AG04449 (cell line): ENCODE measurements at regions of chr6 and their contacts with region 1.

Region 1: DNA sequence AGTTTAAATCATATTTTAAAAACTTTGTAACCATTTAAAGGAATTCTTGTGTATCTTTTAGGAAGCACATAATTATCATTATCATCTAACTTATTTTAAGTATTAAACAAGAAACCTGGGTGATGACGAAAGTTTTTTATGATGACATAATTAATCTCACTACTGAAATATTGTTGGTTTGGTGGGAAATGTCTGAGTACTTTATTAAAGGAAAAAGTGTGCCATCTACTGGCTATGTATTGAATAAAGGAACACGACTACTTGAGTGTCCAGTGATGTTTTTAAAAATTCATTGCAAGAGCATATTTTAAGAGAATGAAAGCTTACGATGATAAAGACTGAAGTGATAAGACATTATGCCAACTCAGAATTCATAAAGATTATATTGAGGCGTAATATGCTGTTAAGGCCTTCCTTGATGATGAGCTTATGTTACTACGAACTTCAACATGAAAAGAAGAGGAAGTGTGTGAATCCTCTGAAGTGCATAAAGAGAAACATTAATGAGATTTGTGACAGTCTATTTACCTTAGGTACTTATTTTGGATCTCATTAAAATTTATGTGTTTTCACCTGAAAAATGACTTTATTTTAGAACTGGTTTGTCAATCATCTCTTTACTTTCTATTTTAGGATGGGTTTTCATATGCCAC is 12.0 kb upstream of the TRMT11 start:
- DNase-seq: no peak
- H3K4me3 ChIP-seq: no peak overlapping the region
- CTCF ChIP-seq: no peak

Region 2: GRCh38 chr6:125498606-125499005 is 475.7 kb before region 1 on chr6:
- CTCF ChIA-PET with region 1: no interaction called
- POLR2A ChIA-PET with region 1: no interaction called
- DNase-seq: no peak
- H3K4me3 ChIP-seq: no peak overlapping the region
- CTCF ChIP-seq: no peak

Region 3: DNA sequence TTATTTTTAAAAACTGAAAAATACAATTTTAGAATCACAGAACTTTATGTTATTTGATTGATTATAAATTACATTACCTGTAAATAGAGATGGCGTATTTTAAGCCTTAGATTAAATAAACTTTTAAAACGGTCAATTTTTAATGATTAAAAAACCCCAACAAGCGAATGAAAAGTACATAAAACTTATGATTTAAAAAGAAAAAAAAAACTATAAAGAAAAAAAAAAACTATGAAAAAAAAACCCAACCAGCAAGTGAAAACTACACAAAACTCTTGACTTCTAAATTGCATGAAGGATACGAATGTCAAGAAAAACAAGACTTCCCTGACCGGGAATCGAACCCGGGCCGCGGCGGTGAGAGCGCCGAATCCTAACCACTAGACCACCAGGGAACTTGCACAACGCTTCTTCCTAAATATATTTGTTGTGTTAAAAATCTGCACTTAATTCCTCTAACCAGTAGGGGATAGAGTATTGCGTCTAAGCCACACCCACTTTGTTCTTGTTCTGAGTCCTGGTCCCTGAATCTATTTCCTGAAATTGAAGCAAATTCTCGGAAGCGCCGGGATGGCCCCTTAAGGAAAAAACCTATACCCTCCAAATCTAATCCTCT is 194.3 kb before region 1 on chr6:
- CTCF ChIA-PET with region 1: interaction called, 46 read pairs
- POLR2A ChIA-PET with region 1: no interaction called
- DNase-seq: no peak
- H3K4me3 ChIP-seq: peak overlapping the region; percentile 73
- CTCF ChIP-seq: no peak

Region 4: GRCh38 chr6:125790358-125791150 is 183.8 kb before region 1 on chr6 and contains the start of gene NCOA7:
- CTCF ChIA-PET with region 1: interaction called, 75 read pairs
- POLR2A ChIA-PET with region 1: no interaction called
- DNase-seq: no peak
- H3K4me3 ChIP-seq: peak within 1 kb of the TSS; percentile 72
- CTCF ChIP-seq: peak; percentile 11

Region 5: GRCh38 chr6:125858427-125859320 is 115.7 kb before region 1 on chr6:
- CTCF ChIA-PET with region 1: interaction called, 65 read pairs
- POLR2A ChIA-PET with region 1: no interaction called
- DNase-seq: no peak
- H3K4me3 ChIP-seq: no peak overlapping the region
- CTCF ChIP-seq: peak; percentile 88

Region 6: GRCh38 chr6:125867483-125867935 is 106.8 kb before region 1 on chr6:
- CTCF ChIA-PET with region 1: interaction called, 10 read pairs
- POLR2A ChIA-PET with region 1: no interaction called
- DNase-seq: peak; percentile 41
- H3K4me3 ChIP-seq: no peak overlapping the region
- CTCF ChIP-seq: no peak

Region 7: DNA sequence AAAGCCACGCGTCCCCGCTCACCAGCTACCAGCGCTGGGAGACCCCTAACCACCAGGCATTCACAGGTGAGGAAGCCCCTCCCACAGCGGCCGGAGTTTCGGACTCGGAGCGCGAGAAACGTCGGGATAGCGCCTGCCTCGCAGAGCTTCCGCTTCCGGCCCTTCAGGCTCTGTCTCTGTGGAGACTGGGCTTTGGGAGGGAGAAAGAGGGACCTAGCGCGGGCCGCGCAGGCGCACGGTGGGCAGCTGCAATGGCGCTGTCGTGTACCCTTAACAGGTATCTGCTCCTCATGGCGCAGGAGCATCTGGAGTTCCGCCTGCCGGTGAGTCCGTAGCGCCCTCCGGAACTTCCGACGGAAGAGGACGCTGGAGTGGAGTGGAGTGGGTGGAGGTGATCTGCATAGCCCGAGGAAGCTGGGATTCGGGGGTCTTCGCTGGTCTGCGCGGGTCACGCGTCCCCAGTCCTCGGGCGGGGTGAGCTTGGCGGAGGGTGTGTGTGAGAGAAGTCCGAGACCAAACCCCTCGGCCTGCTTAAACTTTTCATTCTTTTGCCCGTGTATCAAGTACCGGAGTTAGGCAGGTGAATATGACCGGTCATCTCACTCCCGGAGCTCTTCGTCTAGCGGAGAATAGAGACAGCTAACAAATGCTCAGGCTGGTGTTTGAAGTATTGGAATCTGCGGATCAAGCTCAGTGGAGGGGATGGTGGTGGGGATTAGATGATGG is 12.1 kb after region 1 on chr6 and contains the start of gene TRMT11:
- CTCF ChIA-PET with region 1: interaction called, 14 read pairs
- POLR2A ChIA-PET with region 1: no interaction called
- DNase-seq: no peak
- H3K4me3 ChIP-seq: peak within 1 kb of the TSS; percentile 95
- CTCF ChIP-seq: no peak

Region 8: DNA sequence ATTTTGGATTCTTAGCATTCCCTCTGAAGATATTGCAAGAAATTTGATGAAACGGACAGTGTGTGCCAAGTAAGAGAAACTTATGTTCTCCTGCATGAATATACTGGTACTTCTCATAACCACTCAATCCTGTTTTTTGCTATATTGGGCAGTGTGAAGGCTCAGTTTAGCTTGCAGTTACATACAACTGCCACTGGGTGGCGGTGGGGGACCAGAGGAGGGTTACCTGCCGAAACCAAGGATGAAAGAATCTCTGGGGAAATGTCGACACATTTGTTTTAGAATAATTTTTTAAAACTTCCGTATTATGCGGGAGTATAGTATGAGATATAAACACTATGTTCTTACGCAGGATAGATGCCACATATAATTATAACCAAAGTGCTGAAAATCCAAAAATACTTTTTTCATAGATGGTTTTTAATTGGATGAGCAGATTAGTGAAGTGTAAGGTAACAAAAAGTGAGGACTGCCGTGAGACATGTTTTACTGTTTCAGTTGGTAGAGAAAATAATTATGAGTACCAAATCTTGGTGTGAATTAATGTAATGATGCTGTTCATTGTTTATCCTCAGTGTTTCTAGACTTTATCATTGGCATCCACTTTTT is 21.7 kb after region 1 on chr6:
- CTCF ChIA-PET with region 1: interaction called, 10 read pairs
- POLR2A ChIA-PET with region 1: no interaction called
- DNase-seq: no peak
- H3K4me3 ChIP-seq: no peak overlapping the region
- CTCF ChIP-seq: peak; percentile 87